B cell (primary cell): ENCODE measurements at regions of chr7 and their contacts with region 1.

Region 1: DNA sequence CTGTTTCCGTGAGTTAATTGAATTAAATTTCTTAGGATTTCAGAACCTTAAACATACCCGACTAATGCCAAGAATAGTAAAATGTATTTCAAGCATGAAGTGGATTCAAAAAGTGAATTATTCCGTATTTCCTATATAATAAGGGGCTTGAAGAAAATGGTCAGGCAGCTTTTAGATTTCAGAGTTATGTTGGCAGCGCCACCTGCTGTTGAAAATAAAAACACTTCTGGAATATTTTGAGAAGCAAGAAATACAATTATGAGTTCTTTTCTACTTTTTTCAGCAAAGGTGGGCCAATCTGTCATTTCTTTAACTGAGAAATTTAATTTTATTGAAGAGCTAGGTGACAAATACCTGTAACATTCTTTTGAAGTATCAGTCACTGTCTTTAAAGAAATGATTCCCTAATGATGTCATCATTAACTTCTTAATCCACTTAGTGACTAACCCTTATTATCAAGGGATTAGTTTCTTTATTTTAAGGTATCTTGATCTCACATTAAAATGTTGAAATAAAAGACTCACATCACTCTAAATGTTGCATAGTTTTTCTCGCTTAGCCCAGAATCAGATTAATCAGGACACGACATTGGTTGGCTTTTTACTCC is 36.6 kb upstream of the AGR3 start:
- DNase-seq: peak; percentile 60
- ATAC-seq: no peak
- H3K4me3 ChIP-seq: no peak overlapping the region
- H3K4me3 Mint-ChIP-seq: no peak overlapping the region
- H3K27ac ChIP-seq: no peak overlapping the region
- H3K27ac Mint-ChIP-seq: no peak overlapping the region
- H3K4me1 ChIP-seq: peaks cover 7 to 24% of the 10 kb centered on the region in 2 donors
- H3K4me1 Mint-ChIP-seq: peaks cover 26% of the 10 kb centered on the region
- H3K27me3 ChIP-seq: no peaks in the 10 kb centered on the region
- H3K27me3 Mint-ChIP-seq: no peaks in the 10 kb centered on the region
- CTCF ChIP-seq: peak; percentile 84

Region 2: DNA sequence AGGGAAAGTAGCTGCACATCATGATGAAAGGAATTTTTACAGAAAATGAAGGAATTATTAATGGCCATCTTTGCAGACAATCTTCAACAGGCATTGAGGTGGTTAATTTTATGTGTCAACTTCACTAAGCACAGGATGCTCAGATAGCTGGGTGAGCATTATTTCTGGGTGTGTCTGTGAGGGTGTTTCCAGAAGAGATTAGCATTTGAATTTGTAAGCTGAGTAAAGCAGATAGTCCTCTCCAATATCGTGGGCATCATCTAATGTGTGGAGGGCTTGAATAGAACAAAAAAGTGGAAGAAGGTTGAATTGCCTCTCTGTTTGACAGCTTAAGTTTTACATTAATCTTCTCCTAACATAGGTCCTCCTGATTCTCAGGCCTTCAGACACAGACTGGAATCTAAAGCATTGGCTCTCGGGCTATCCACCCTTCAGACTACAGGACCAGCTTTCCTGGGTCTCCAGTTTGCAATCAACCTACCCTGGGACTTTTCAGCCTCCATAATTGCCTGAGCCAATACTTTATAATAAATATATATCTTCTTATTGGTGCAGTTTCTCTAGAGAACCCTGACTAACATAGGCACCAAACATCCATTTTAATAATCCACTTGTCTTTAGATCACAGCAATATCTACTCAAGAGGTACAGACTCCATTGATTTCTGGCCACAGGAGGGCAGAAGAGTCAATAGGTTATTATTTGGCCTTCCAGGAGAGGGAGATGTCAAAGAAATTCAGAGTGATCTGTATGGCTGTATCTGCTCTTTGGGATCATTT is 486.6 kb before region 1 on chr7:
- CTCF ChIA-PET with region 1: interaction called, 10 read pairs
- POLR2A ChIA-PET with region 1: no interaction called
- intact Hi-C with region 1: loop called (anchors 1 kb)
- DNase-seq: peak; percentile 46
- ATAC-seq: peak; percentile 61
- H3K4me3 ChIP-seq: no peak overlapping the region
- H3K4me3 Mint-ChIP-seq: no peak overlapping the region
- H3K27ac ChIP-seq: no peak overlapping the region
- H3K27ac Mint-ChIP-seq: no peak overlapping the region
- H3K4me1 ChIP-seq: no peaks in the 10 kb centered on the region
- H3K4me1 Mint-ChIP-seq: no peaks in the 10 kb centered on the region
- H3K27me3 ChIP-seq: no peaks in the 10 kb centered on the region
- H3K27me3 Mint-ChIP-seq: peaks cover 7% of the 10 kb centered on the region
- CTCF ChIP-seq: peak; percentile 49

Region 3: DNA sequence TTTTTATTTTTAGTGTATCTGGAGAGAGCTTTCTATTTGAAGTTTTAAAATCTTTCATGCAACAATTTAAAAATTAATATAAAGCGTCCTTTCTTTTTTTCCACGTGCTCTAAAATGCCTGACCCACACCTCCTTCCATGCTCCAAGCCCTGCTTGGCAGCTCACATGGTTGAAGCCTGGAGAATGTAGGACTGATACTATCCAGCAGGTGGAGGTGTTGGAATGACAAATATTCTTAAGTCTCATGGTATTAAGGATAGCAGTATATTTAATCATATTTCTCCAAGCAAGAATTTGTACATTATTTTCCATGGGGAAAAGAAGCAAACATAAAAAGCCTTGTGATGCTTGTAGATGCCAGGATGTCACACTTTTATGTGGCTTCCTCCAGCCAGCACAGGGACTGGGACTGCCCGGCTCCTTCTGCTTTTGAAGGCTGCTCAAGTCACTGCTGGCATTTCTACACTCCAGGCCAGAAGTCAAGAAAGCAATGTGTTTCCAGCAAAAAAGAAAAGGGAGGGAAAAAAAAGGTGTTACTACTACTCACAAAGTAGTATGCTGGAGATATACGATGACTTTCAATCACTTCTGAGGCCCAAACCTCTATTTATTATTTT is 222.7 kb before region 1 on chr7:
- CTCF ChIA-PET with region 1: interaction called, 107 read pairs
- POLR2A ChIA-PET with region 1: no interaction called
- intact Hi-C with region 1: loop called (anchors 1 kb)
- DNase-seq: peak; percentile 59
- ATAC-seq: peak; percentile 51
- H3K4me3 ChIP-seq: no peak overlapping the region
- H3K4me3 Mint-ChIP-seq: no peak overlapping the region
- H3K27ac ChIP-seq: no peak overlapping the region
- H3K27ac Mint-ChIP-seq: no peak overlapping the region
- H3K4me1 ChIP-seq: no peaks in the 10 kb centered on the region
- H3K4me1 Mint-ChIP-seq: no peaks in the 10 kb centered on the region
- H3K27me3 ChIP-seq: no peaks in the 10 kb centered on the region
- H3K27me3 Mint-ChIP-seq: no peaks in the 10 kb centered on the region
- CTCF ChIP-seq: peak; percentile 79

Region 4: GRCh38 chr7:16702440-16702839 is 216.0 kb before region 1 on chr7:
- CTCF ChIA-PET with region 1: interaction called, 107 read pairs
- POLR2A ChIA-PET with region 1: no interaction called
- intact Hi-C with region 1: loop called (anchors 2 kb)
- DNase-seq: peak; percentile 8
- ATAC-seq: no peak
- H3K4me3 ChIP-seq: no peak overlapping the region
- H3K4me3 Mint-ChIP-seq: no peak overlapping the region
- H3K27ac ChIP-seq: no peak overlapping the region
- H3K27ac Mint-ChIP-seq: no peak overlapping the region
- H3K4me1 ChIP-seq: no peaks in the 10 kb centered on the region
- H3K4me1 Mint-ChIP-seq: no peaks in the 10 kb centered on the region
- H3K27me3 ChIP-seq: no peaks in the 10 kb centered on the region
- H3K27me3 Mint-ChIP-seq: no peaks in the 10 kb centered on the region
- CTCF ChIP-seq: peak; percentile 16

Region 5: GRCh38 chr7:16753102-16753931 is 165.1 kb before region 1 on chr7 and contains the start of gene TSPAN13:
- CTCF ChIA-PET with region 1: no interaction called
- POLR2A ChIA-PET with region 1: no interaction called
- intact Hi-C with region 1: loop called (anchors 5 kb)
- DNase-seq: peak; percentile 87
- ATAC-seq: peak; percentile 86
- H3K4me3 ChIP-seq: peak within 1 kb of the TSS; percentile 80 to 92 (median 86)
- H3K4me3 Mint-ChIP-seq: peak within 1 kb of the TSS; percentile 100
- H3K27ac ChIP-seq: peak within 1 kb of the TSS; percentile 58 to 71
- H3K27ac Mint-ChIP-seq: peak within 1 kb of the TSS; percentile 96
- H3K4me1 ChIP-seq: peaks cover 29% of the 10 kb centered on the region in 2 donors
- H3K4me1 Mint-ChIP-seq: peaks cover 36% of the 10 kb centered on the region
- H3K27me3 ChIP-seq: no peaks in the 10 kb centered on the region
- H3K27me3 Mint-ChIP-seq: no peaks in the 10 kb centered on the region
- CTCF ChIP-seq: no peak
- total RNA-seq, gene TSPAN13: 26.2 and 26.3 TPM in 2 replicates

Region 6: GRCh38 chr7:16801111-16801542 is 117.3 kb before region 1 on chr7:
- CTCF ChIA-PET with region 1: interaction called, 40 read pairs
- POLR2A ChIA-PET with region 1: no interaction called
- intact Hi-C with region 1: loop called (anchors 1 kb)
- DNase-seq: peak; percentile 40
- ATAC-seq: peak; percentile 36
- H3K4me3 ChIP-seq: no peak overlapping the region
- H3K4me3 Mint-ChIP-seq: no peak overlapping the region
- H3K27ac ChIP-seq: no peak overlapping the region
- H3K27ac Mint-ChIP-seq: no peak overlapping the region
- H3K4me1 ChIP-seq: no peaks in the 10 kb centered on the region
- H3K4me1 Mint-ChIP-seq: no peaks in the 10 kb centered on the region
- H3K27me3 ChIP-seq: no peaks in the 10 kb centered on the region
- H3K27me3 Mint-ChIP-seq: no peaks in the 10 kb centered on the region
- CTCF ChIP-seq: peak; percentile 64

Region 7: GRCh38 chr7:16891338-16891737 is 27.1 kb before region 1 on chr7:
- CTCF ChIA-PET with region 1: interaction called, 35 read pairs
- POLR2A ChIA-PET with region 1: no interaction called
- intact Hi-C with region 1: loop called (anchors 1 kb)
- DNase-seq: peak; percentile 61
- ATAC-seq: peak; percentile 67
- H3K4me3 ChIP-seq: no peak overlapping the region
- H3K4me3 Mint-ChIP-seq: no peak overlapping the region
- H3K27ac ChIP-seq: no peak overlapping the region
- H3K27ac Mint-ChIP-seq: no peak overlapping the region
- H3K4me1 ChIP-seq: no peaks in the 10 kb centered on the region
- H3K4me1 Mint-ChIP-seq: peaks cover 5% of the 10 kb centered on the region
- H3K27me3 ChIP-seq: no peaks in the 10 kb centered on the region
- H3K27me3 Mint-ChIP-seq: no peaks in the 10 kb centered on the region
- CTCF ChIP-seq: peak; percentile 59